CD8-positive, alpha-beta T cell (primary cell): ENCODE measurements at regions of chr3 and their contacts with region 1.

Region 1: GRCh38 chr3:195894780-195895607 is 13.4 kb downstream of the TNK2 start:
- DNase-seq: peak; percentile 35 to 86 (median 74)
- ATAC-seq: peak; percentile 66
- H3K4me3 ChIP-seq: peak overlapping the region; percentile 56 to 76
- H3K4me3 Mint-ChIP-seq: peak overlapping the region; percentile 92
- H3K27ac ChIP-seq: peak overlapping the region; percentile 79 to 80
- H3K27ac Mint-ChIP-seq: peak overlapping the region; percentile 94
- H3K4me1 ChIP-seq: peaks cover 38% of the 10 kb centered on the region
- H3K4me1 Mint-ChIP-seq: peaks cover 44% of the 10 kb centered on the region
- H3K27me3 ChIP-seq: no peaks in the 10 kb centered on the region
- H3K27me3 Mint-ChIP-seq: no peaks in the 10 kb centered on the region
- CTCF ChIP-seq: peak; percentile 97

Region 2: GRCh38 chr3:195863121-195864006 is 31.6 kb before region 1 on chr3:
- CTCF ChIA-PET with region 1: interaction called, 75 read pairs
- POLR2A ChIA-PET with region 1: interaction called, 4 read pairs
- intact Hi-C with region 1: loop called (anchors 1 kb)
- DNase-seq: peak; percentile 36 to 77 (median 66)
- ATAC-seq: peak; percentile 78
- H3K4me3 ChIP-seq: no peak overlapping the region
- H3K4me3 Mint-ChIP-seq: no peak overlapping the region
- H3K27ac ChIP-seq: no peak overlapping the region
- H3K27ac Mint-ChIP-seq: no peak overlapping the region
- H3K4me1 ChIP-seq: peaks cover 4% of the 10 kb centered on the region
- H3K4me1 Mint-ChIP-seq: peaks cover 4% of the 10 kb centered on the region
- H3K27me3 ChIP-seq: no peaks in the 10 kb centered on the region
- H3K27me3 Mint-ChIP-seq: no peaks in the 10 kb centered on the region
- CTCF ChIP-seq: peak; percentile 57

Region 3: DNA sequence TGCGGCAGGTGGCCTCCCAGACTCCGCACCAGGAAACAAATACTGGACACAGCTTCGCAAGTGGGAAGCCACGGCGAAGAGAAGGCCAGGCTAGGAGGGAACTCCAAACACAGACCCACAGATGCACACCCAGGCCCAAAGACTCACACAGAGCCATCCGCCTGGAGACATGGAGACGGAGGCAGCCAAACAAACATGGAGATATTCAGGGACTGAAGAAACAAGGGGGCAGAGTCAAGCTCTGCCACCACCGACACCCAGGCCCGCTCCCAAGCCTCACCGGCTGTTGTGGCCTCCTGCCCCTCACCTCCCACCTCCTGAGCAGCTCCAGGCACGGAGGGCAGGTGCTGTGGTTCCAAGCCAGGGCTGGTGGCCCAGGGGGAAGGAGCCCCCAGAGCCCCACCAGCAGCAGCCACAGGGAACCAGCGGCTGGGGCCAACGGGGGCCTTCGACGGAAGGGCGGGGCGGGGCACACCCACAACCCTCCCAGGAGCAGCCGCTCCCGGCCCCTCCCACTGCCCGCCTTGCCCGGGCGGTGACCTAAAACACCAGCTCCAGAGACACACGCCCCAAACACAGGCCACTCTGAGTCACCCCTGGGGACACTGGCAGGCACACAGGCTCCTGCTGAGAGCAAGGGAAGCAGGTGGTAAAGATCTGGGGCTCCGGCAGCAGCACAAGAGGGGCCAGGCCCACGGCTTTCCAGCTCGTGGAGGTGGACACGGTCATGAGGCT is 18.5 kb before region 1 on chr3:
- CTCF ChIA-PET with region 1: interaction called, 10 read pairs
- POLR2A ChIA-PET with region 1: no interaction called
- intact Hi-C with region 1: no loop called
- DNase-seq: peak in 1 of 9 experiments; percentile 32
- ATAC-seq: no peak
- H3K4me3 ChIP-seq: no peak overlapping the region
- H3K4me3 Mint-ChIP-seq: no peak overlapping the region
- H3K27ac ChIP-seq: no peak overlapping the region
- H3K27ac Mint-ChIP-seq: no peak overlapping the region
- H3K4me1 ChIP-seq: no peaks in the 10 kb centered on the region
- H3K4me1 Mint-ChIP-seq: no peaks in the 10 kb centered on the region
- H3K27me3 ChIP-seq: no peaks in the 10 kb centered on the region
- H3K27me3 Mint-ChIP-seq: no peaks in the 10 kb centered on the region
- CTCF ChIP-seq: no peak

Region 4: DNA sequence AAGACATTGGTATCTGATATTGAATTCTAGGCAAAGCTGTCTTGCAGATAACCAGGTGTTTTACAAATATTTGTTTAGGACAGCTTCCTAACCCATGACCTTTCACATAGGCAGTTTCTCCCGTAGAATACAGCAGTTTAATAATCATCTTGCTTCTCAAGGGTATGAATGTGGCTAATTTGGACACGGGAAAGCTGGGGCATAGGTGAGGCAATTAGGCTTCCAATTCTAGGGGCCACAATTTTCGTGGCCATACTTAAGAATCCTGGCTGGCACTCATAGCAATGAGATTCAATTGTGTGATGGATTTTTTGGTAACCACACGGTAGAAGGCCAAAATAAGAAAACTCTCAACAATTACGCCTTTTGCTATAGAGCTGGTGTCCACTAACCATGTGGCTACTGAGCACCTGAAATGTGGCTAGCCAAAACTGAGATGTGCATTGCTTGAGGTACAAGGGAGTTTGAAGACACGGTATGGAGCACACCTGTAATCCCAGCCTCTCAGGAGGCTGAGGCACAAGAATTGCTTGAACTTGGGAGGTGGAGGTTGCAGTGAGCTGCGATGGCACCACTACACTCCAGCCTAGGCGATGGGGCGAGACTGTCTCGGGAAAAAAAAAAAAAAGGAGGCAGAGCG is 152.5 kb after region 1 on chr3:
- CTCF ChIA-PET with region 1: no interaction called
- POLR2A ChIA-PET with region 1: no interaction called
- intact Hi-C with region 1: no loop called
- DNase-seq: no peak
- ATAC-seq: no peak
- H3K4me3 ChIP-seq: no peak overlapping the region
- H3K4me3 Mint-ChIP-seq: no peak overlapping the region
- H3K27ac ChIP-seq: no peak overlapping the region
- H3K27ac Mint-ChIP-seq: no peak overlapping the region
- H3K4me1 ChIP-seq: no peaks in the 10 kb centered on the region
- H3K4me1 Mint-ChIP-seq: no peaks in the 10 kb centered on the region
- H3K27me3 ChIP-seq: no peaks in the 10 kb centered on the region
- H3K27me3 Mint-ChIP-seq: no peaks in the 10 kb centered on the region
- CTCF ChIP-seq: no peak